Ovary (tissue), 10 donors: ENCODE measurements at regions of chr1 and their contacts with region 1.

Region 1: DNA sequence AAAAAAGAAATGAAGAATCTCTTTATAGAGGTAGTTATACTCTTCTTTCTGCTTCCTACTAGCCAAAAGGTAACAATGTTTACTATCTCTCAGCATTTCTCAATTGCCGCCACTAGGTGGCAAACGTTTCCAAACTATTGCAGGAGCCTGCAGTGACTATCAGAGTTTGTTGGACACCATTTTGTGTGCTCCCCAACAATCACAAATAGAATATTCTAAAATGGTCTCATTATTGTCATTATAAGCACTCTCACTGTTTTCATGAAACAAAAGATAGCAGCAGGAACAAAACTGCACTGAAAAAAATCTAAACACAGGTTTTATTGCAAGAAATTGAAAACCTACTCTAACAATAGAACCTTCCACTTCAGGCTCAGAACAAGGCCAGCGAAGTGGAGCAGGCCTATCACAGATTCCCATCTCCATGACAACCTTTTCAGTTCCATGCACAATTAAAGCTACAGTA is 83.9 kb upstream of the PLPPR4 start:
- DNase-seq: peak; percentile 55 to 82 (median 62)
- H3K4me3 ChIP-seq: no peak overlapping the region
- H3K27ac ChIP-seq: no peak overlapping the region
- H3K4me1 ChIP-seq: no peaks in the 10 kb centered on the region
- H3K27me3 ChIP-seq: no peaks in the 10 kb centered on the region
- CTCF ChIP-seq: peak; percentile 44 to 68 (median 67)
- EP300 ChIP-seq: no peak
- POLR2A ChIP-seq: no peak

Region 2: DNA sequence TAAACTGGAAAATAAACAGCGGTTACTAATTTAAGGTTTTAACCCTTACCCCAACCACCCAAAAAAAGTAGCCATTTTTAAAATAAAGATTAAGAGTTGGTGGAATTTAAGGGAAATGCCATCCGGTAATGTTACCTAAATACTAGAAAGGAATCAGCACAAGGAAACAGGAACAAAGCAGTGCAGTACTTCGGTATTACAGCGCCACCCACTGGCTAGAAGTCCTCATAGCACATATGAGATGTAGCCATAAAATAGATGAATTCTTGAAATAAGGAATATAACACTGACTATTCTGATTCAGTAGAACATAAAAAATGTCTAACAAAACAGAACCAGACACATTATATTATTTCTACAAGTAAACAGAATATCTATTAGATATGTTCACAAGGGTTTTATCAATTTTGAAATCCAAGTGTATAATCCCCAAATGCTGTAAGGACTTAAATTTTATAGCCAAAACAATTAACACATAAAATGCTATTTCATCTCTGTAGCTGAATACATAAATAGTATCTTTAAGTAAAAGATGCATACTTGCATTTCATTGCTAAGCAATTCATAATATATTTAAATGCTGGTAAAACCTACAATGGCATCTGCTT is 527.3 kb after region 1 on chr1:
- intact Hi-C with region 1: loop called (anchors 5 to 10 kb)
- DNase-seq: peak; percentile 66 to 85 (median 74)
- H3K4me3 ChIP-seq: no peak overlapping the region
- H3K27ac ChIP-seq: no peak overlapping the region
- H3K4me1 ChIP-seq: no peaks in the 10 kb centered on the region
- H3K27me3 ChIP-seq: no peaks in the 10 kb centered on the region
- CTCF ChIP-seq: peak; percentile 77 to 95 (median 90)
- EP300 ChIP-seq: no peak
- POLR2A ChIP-seq: no peak

Region 3: DNA sequence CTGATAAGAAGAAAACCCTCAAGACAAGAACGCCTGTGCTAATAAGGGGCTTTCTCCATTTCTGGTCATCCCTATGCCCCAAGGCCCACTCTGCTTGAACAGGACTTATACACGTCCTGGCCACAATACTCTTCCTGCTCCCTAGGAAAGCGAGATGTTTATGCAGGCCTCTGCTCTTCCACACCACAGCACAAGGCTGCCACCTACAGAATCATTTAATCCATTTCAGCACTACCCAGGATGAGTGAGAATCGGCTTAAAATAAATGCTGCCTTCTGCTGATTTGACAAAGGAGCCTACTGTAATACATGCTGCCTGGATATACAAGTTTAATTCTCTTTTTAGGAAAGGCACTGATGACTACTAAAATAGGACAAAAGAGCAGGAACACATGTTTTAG is 556.6 kb after region 1 on chr1:
- intact Hi-C with region 1: loop called in 1 of 4 experiments (anchors 10 kb)
- DNase-seq: no peak
- H3K4me3 ChIP-seq: no peak overlapping the region
- H3K27ac ChIP-seq: no peak overlapping the region
- H3K4me1 ChIP-seq: no peaks in the 10 kb centered on the region
- H3K27me3 ChIP-seq: no peaks in the 10 kb centered on the region
- CTCF ChIP-seq: no peak
- EP300 ChIP-seq: no peak
- POLR2A ChIP-seq: no peak